ENCODE measurements at regions of chr18 and their contacts with region 1.

Region 1: GRCh38 chr18:32018331-32019250 is at the start of gene RNF125:
- DNase-seq: peak; percentile 94
- ATAC-seq: peak; percentile 88
- H3K4me3 Mint-ChIP-seq: peak within 1 kb of the TSS; percentile 100
- H3K27ac Mint-ChIP-seq: peak within 1 kb of the TSS; percentile 99
- H3K4me1 Mint-ChIP-seq: peaks cover 53% of the 10 kb centered on the region
- H3K27me3 Mint-ChIP-seq: no peaks in the 10 kb centered on the region
- total RNA-seq, gene RNF125: 26.5 to 27.9 TPM

Region 2: DNA sequence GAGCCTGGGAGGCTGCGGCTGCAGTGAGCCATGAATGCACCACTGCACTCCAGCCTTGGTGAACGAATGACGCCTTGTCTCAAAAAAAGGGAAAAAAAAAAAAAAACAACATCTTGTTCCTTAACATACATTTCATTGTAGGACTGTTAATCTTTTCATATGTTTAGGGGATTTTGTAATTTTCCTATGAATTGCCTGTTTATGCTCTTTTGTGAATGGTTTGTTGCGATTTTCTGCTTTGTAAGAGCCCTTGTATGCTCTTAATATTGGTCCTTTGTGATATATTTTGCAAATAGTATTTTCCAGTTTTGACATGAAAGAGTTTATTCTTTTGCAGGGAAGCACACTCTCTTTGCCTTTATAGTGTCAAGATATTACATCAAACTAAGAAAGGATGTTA is 125.7 kb before region 1 on chr18:
- CTCF ChIA-PET with region 1: no interaction called
- POLR2A ChIA-PET with region 1: no interaction called
- DNase-seq: no peak
- ATAC-seq: no peak
- H3K4me3 Mint-ChIP-seq: no peak overlapping the region
- H3K27ac Mint-ChIP-seq: no peak overlapping the region
- H3K4me1 Mint-ChIP-seq: no peaks in the 10 kb centered on the region
- H3K27me3 Mint-ChIP-seq: no peaks in the 10 kb centered on the region

Region 3: GRCh38 chr18:31942999-31943865 is 75.4 kb before region 1 on chr18 and contains the start of gene TRAPPC8:
- CTCF ChIA-PET with region 1: interaction called, 44 read pairs
- POLR2A ChIA-PET with region 1: interaction called, 70 read pairs
- DNase-seq: peak; percentile 95
- ATAC-seq: peak; percentile 93
- H3K4me3 Mint-ChIP-seq: peak within 1 kb of the TSS; percentile 95
- H3K27ac Mint-ChIP-seq: peak within 1 kb of the TSS; percentile 98
- H3K4me1 Mint-ChIP-seq: peaks cover 43% of the 10 kb centered on the region
- H3K27me3 Mint-ChIP-seq: no peaks in the 10 kb centered on the region
- total RNA-seq, gene TRAPPC8: 41.5 to 42.1 TPM

Region 4: GRCh38 chr18:32040936-32041335 is 22.3 kb after region 1 on chr18:
- CTCF ChIA-PET with region 1: interaction called, 16 read pairs
- POLR2A ChIA-PET with region 1: interaction called, 41 read pairs
- DNase-seq: peak; percentile 82
- ATAC-seq: peak; percentile 90
- H3K4me3 Mint-ChIP-seq: peak overlapping the region; percentile 65
- H3K27ac Mint-ChIP-seq: peak overlapping the region; percentile 89
- H3K4me1 Mint-ChIP-seq: peaks cover 66% of the 10 kb centered on the region
- H3K27me3 Mint-ChIP-seq: no peaks in the 10 kb centered on the region

Region 5: DNA sequence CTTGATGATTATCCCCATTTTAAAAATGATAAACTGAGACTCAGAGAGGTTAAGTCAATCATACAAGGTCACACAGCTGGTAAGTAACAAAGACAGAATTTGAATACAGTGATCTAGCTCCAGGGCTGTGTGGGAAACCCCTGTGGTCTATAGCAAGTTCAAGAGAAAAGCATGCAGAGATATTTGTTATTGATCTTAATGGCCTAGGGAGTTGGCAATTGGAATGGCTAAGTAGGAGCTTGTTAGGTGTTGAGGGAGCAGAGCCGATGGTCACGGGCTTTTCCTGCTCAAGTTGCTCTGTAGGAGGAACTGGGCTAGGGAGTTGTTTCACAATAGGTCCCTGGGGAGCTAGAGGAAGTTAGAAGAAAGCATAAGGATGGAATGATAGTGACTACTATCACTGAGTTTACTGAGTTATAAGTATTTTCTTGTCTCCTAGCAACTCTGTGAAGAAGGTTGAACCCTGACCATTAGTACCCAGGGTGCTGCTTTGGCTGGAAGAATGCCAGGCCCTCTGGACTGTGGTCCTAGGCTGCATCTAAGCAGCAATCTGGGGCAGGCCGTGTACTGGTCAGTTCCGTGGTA is 30.0 kb after region 1 on chr18:
- CTCF ChIA-PET with region 1: interaction called, 10 read pairs
- POLR2A ChIA-PET with region 1: interaction called, 28 read pairs
- DNase-seq: peak; percentile 31
- ATAC-seq: peak; percentile 62
- H3K4me3 Mint-ChIP-seq: peak overlapping the region; percentile 17
- H3K27ac Mint-ChIP-seq: peak overlapping the region; percentile 85
- H3K4me1 Mint-ChIP-seq: peaks cover 47% of the 10 kb centered on the region
- H3K27me3 Mint-ChIP-seq: no peaks in the 10 kb centered on the region

Region 6: GRCh38 chr18:32086861-32087260 is 68.3 kb after region 1 on chr18:
- CTCF ChIA-PET with region 1: interaction called, 22 read pairs
- POLR2A ChIA-PET with region 1: interaction called, 67 read pairs
- DNase-seq: no peak
- ATAC-seq: no peak
- H3K4me3 Mint-ChIP-seq: no peak overlapping the region
- H3K27ac Mint-ChIP-seq: no peak overlapping the region
- H3K4me1 Mint-ChIP-seq: peaks cover 53% of the 10 kb centered on the region
- H3K27me3 Mint-ChIP-seq: no peaks in the 10 kb centered on the region

Region 7: GRCh38 chr18:32092422-32093101 is 74.0 kb after region 1 on chr18:
- CTCF ChIA-PET with region 1: interaction called, 10 read pairs
- POLR2A ChIA-PET with region 1: interaction called, 67 read pairs
- DNase-seq: peak; percentile 100
- ATAC-seq: peak; percentile 91
- H3K4me3 Mint-ChIP-seq: peak overlapping the region; percentile 96
- H3K27ac Mint-ChIP-seq: peak overlapping the region; percentile 98
- H3K4me1 Mint-ChIP-seq: peaks cover 50% of the 10 kb centered on the region
- H3K27me3 Mint-ChIP-seq: no peaks in the 10 kb centered on the region

Region 8: GRCh38 chr18:32175265-32175664 is 156.7 kb after region 1 on chr18:
- CTCF ChIA-PET with region 1: no interaction called
- POLR2A ChIA-PET with region 1: no interaction called
- DNase-seq: no peak
- ATAC-seq: no peak
- H3K4me3 Mint-ChIP-seq: no peak overlapping the region
- H3K27ac Mint-ChIP-seq: no peak overlapping the region
- H3K4me1 Mint-ChIP-seq: no peaks in the 10 kb centered on the region
- H3K27me3 Mint-ChIP-seq: peaks cover 3% of the 10 kb centered on the region